Head of caudate nucleus (tissue), 42 donors: ENCODE measurements at regions of chr10 and their contacts with region 1.

Region 1: GRCh38 chr10:121734589-121735045 is 136.4 kb upstream of the FGFR2 start:
- DNase-seq: peak in 18 of 42 donors; percentile 10 to 75 (median 28)

Region 2: GRCh38 chr10:120948889-120949608 is 785.6 kb before region 1 on chr10:
- intact Hi-C with region 1: loop called (anchors 5 kb)
- DNase-seq: peak; percentile 42 to 91 (median 80)

Region 3: DNA sequence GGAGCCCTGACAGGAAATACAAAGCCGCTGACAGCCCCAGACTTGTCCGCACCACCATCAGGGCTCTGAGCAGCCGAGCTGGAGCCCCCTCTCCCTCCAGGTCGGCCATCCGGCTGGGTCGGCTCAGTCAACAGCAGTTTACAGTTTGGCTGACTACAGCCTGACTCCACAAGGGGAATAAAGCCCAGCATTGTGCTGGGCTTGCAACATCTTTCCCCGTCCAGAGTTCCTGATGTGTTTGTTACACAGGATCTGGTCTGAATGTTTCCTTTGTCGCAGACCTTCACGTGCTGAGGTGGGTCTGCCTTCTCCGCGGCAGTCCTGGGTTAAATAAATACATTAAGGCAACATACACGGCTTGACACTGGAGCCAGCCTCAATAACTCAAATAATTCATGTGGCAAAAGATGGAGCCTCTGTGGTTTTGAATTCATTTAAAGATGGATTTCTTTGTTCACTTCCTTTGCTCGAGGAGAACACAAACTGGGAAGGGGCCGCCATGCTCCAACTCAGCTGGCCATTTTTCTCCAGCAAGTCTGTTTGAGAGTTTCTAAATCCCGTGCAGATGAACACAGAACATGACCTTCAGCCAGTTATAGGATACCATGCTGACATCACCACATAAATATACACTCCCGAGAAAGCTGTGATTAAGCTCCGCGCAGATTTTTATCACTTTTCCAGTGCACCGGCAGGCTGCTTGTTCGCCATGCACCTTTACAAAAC is 691.3 kb before region 1 on chr10:
- intact Hi-C with region 1: no loop called
- DNase-seq: peak in 6 of 42 donors; percentile 3 to 37 (median 10)

Region 4: DNA sequence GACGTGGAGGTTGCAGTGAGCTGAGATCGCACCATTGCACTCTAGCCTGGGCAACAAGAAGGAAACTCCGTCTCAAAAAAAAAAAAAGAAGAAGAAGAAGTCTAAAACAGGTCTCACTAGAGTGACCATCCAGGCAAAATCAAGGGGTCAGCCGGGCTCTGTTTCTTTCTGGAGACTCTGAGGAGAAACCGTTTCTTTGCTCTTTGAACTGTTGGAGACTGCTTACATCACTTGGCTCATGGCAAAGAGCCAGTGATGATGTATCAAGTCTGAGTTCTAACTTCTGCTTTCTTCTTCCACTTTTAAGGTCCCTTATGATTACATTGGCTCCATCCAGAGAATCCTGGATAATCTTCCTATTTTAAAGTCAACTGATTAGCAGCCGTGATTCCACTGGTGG is 576.6 kb before region 1 on chr10:
- intact Hi-C with region 1: loop called (anchors 10 kb)
- DNase-seq: peak in 15 of 42 donors; percentile 24 to 58 (median 40)

Region 5: GRCh38 chr10:121608469-121609190 is 126.0 kb before region 1 on chr10:
- intact Hi-C with region 1: loop called (anchors 10 kb)
- DNase-seq: peak in 38 of 42 donors; percentile 40 to 87 (median 71)